ENCODE measurements at regions of chr3 and their contacts with region 1.

Region 1: DNA sequence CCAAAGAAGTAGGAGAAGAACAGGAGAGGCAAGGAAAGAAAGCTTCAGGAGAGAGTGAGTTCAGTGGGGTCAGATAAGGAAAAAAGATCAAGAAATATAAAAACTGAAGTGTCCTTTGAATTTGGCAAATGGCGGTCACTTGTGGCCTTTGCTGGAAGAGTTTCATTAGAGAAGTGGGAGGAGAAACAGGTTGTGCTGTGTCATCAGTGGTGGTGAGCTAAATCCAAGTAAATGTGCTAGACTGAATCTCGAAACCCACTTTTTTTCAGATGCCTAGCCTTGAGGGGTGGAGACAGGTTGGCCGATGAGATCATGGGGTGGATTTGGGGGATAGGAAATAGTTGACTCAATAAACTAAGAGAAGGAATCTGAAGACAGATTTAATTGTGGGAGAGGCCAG is 43.7 kb downstream of the CHRD start:
- DNase-seq: no peak
- ATAC-seq: no peak
- H3K4me3 ChIP-seq: no peak overlapping the region
- H3K27ac ChIP-seq: no peak overlapping the region
- H3K4me1 ChIP-seq: no peaks in the 10 kb centered on the region
- H3K27me3 ChIP-seq: peaks cover 0 to 2% (median 0%) of the 10 kb centered on the region in 3 donors
- CTCF ChIP-seq: no peak

Region 2: GRCh38 chr3:184491867-184492615 is 68.5 kb after region 1 on chr3:
- intact Hi-C with region 1: loop called in 1 of 2 experiments (anchors 5 kb)
- DNase-seq: peak; percentile 56 to 67
- ATAC-seq: no peak
- H3K4me3 ChIP-seq: no peak overlapping the region
- H3K27ac ChIP-seq: no peak overlapping the region
- H3K4me1 ChIP-seq: no peaks in the 10 kb centered on the region
- H3K27me3 ChIP-seq: peaks cover 0 to 60% (median 8%) of the 10 kb centered on the region in 3 donors
- CTCF ChIP-seq: no peak